PC-3 (cell line): ENCODE measurements at regions of chr16 and their contacts with region 1.

Region 1: GRCh38 chr16:6645768-6646568 is 686.7 kb upstream of the RBFOX1 start:
- DNase-seq: no peak
- ATAC-seq: no peak
- H3K4me3 ChIP-seq: no peak overlapping the region
- H3K27ac ChIP-seq: no peak overlapping the region
- H3K4me1 ChIP-seq: no peaks in the 10 kb centered on the region
- H3K27me3 ChIP-seq: peaks cover 21% of the 10 kb centered on the region
- CTCF ChIP-seq: no peak

Region 2: DNA sequence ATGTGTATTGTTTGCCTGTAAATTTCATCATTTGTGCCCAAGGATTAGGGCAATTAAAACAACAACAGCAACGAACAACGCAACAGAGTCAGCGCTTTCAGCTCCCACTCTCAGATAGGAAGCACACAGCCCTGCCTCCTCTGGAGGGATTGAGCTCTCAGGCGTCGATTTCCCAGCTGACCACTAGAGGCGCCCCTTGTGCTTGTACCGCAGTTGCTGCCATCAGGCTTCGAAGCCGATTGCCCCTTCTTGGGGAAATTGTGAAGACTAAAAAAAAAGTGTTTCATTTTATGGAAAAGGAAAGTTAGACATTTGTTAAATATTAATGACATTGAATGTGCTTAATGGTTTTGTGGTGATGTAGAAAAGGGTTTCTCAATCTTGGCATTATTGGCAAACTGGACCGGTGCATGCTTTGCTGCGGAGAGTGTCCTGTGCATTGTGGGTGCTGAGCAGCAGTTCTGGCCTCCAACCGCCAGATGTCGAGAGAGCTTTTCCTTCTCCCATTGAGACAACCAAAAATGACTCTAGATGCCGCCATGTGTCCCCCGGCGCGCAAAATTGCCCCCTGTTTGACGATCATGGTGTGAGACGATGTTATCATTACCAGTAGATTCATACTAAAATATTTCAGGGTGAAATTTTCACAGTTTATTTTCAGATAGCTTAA is 36.3 kb after region 1 on chr16:
- CTCF ChIA-PET with region 1: interaction called, 14 read pairs
- POLR2A ChIA-PET with region 1: no interaction called
- intact Hi-C with region 1: no loop called
- DNase-seq: peak; percentile 6
- ATAC-seq: no peak
- H3K4me3 ChIP-seq: no peak overlapping the region
- H3K27ac ChIP-seq: no peak overlapping the region
- H3K4me1 ChIP-seq: no peaks in the 10 kb centered on the region
- H3K27me3 ChIP-seq: no peaks in the 10 kb centered on the region
- CTCF ChIP-seq: peak; percentile 51